IMR-90 (cell line): ENCODE measurements at regions of chr3 and their contacts with region 1.

Region 1: DNA sequence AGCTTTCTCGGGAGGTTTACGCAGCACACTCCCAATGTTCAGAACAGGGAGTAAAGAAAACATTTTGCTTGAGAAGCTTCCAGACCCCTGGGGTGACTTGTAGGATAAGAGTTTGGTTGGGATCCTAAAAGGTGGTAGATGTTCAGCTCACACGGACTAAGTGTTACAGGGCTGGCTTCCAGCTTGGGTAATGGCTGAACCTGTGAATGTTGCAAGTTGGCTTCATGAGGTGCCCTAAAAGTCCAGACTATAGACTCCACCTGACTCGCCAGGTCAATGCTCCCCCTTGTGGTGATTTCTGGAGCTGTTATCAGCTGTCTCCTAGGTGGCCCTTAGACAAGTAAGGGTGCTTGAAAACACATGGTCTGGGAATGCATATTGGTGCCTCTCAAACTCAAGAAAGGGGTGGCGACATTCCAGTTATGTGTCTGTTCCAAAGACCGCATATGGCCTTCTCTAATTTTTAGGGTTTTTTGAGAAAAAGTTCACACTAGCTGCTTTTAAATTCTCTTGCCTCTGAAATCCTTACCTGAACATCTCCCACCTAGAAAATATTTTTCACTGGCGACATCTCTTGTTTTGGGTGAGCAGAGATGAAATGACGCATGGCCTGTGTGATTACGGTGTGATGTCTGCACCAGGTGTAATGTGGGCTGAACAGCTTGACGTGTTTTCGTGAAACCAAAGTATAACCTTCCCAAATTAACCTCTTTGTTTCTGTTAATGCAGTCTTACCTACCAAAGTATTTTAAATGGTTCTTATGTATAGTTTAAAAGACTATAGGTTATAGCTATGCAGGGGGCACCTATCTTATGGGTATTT is 175.7 kb upstream of the KBTBD8 start:
- DNase-seq: peak; percentile 67
- ATAC-seq: peak; percentile 72; the same call in 1 of the 2 replicates
- H3K4me3 ChIP-seq: no peak overlapping the region
- H3K27ac ChIP-seq: no peak overlapping the region
- H3K4me1 ChIP-seq: no peaks in the 10 kb centered on the region
- H3K27me3 ChIP-seq: peaks cover 11% of the 10 kb centered on the region
- CTCF ChIP-seq: peak; percentile 70
- POLR2A ChIP-seq: no peak
- RAD21 ChIP-seq: peak; percentile 73

Region 2: GRCh38 chr3:65094723-65095122 is 1727.7 kb before region 1 on chr3:
- CTCF ChIA-PET with region 1: no interaction called
- POLR2A ChIA-PET with region 1: no interaction called
- dilution Hi-C with region 1: no loop called
- in situ Hi-C with region 1: no loop called
- intact Hi-C with region 1: no loop called
- DNase-seq: no peak
- ATAC-seq: no peak
- H3K4me3 ChIP-seq: no peak overlapping the region
- H3K27ac ChIP-seq: no peak overlapping the region
- H3K4me1 ChIP-seq: no peaks in the 10 kb centered on the region
- H3K27me3 ChIP-seq: no peaks in the 10 kb centered on the region
- CTCF ChIP-seq: no peak
- POLR2A ChIP-seq: no peak
- RAD21 ChIP-seq: no peak

Region 3: DNA sequence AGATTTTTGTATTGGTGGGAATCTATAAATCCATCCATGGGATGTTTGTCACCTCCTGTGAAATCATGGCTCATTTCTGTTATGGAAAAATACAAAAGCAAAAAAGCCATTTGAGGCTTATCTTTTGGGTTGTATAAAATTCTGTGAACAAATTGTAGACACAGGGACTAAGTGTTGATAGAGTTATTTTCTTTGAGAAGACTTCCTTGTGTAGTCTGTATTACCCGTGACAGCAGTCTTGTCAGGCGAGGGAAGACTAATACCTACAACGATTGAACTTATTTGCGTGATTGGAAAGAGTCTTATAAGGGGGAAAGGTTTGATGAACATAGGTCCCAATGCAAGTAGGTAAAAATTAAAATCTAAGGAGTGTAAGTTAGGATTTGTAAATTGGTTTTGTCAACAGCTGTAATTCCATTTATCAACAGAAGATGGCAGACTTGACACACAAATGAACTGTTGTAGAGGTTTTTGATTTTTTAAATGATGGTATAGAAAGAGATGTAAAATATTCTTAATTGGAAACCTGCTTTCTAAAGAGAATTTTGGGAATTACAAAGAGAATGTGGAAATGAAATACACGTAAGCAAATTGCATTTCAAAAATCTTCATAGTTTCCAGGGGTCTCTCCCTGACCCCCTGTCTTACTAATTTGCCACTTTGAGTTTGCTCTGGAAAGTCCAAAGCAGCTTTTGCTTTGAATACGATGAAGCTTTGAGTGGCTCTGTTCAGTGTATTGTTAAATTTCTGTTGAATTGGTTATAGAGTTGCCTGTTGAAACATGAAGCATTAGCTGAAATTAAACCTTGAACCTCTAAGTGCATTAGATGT is 568.4 kb before region 1 on chr3:
- CTCF ChIA-PET with region 1: interaction called, 25 read pairs
- POLR2A ChIA-PET with region 1: no interaction called
- dilution Hi-C with region 1: no loop called
- in situ Hi-C with region 1: no loop called
- intact Hi-C with region 1: loop called (anchors 2 kb)
- DNase-seq: peak; percentile 67
- ATAC-seq: peak; percentile 70
- H3K4me3 ChIP-seq: no peak overlapping the region
- H3K27ac ChIP-seq: no peak overlapping the region
- H3K4me1 ChIP-seq: peaks cover 12% of the 10 kb centered on the region
- H3K27me3 ChIP-seq: no peaks in the 10 kb centered on the region
- CTCF ChIP-seq: peak; percentile 75
- POLR2A ChIP-seq: no peak
- RAD21 ChIP-seq: peak; percentile 77

Region 4: GRCh38 chr3:66270701-66271100 is 551.7 kb before region 1 on chr3:
- CTCF ChIA-PET with region 1: interaction called, 14 read pairs
- POLR2A ChIA-PET with region 1: no interaction called
- dilution Hi-C with region 1: no loop called
- in situ Hi-C with region 1: loop called (anchors 5 kb)
- intact Hi-C with region 1: no loop called
- DNase-seq: peak; percentile 86
- ATAC-seq: peak; percentile 78
- H3K4me3 ChIP-seq: no peak overlapping the region
- H3K27ac ChIP-seq: peak overlapping the region; percentile 100; the same call in 1 of the 2 replicates
- H3K4me1 ChIP-seq: peaks cover 24% of the 10 kb centered on the region
- H3K27me3 ChIP-seq: no peaks in the 10 kb centered on the region
- CTCF ChIP-seq: 0 out of 2 replicates have a peak, but pooled peaks have one; percentile 11
- POLR2A ChIP-seq: no peak
- RAD21 ChIP-seq: no peak

Region 5: DNA sequence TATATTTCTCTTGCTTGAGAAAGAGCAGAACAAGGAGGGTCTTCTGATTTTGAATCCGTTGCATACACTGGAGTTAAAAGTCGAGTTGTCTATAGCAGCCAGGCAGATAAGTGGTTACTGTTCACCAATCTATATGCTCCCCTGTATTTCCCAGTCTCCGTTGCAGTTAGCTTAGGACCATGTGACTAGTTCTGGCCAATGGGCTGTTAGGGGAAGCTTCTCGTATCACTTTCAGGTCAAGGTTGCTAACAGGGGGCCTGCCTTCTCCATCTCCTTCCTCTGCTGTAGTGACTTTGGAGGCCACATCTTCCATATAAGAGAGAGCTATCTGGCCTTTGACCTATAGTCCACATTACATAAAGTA is 12.8 kb before region 1 on chr3:
- CTCF ChIA-PET with region 1: interaction called, 11 read pairs
- POLR2A ChIA-PET with region 1: no interaction called
- dilution Hi-C with region 1: no loop called
- in situ Hi-C with region 1: no loop called
- intact Hi-C with region 1: no loop called
- DNase-seq: no peak
- ATAC-seq: no peak
- H3K4me3 ChIP-seq: no peak overlapping the region
- H3K27ac ChIP-seq: no peak overlapping the region
- H3K4me1 ChIP-seq: no peaks in the 10 kb centered on the region
- H3K27me3 ChIP-seq: no peaks in the 10 kb centered on the region
- CTCF ChIP-seq: no peak
- POLR2A ChIP-seq: no peak
- RAD21 ChIP-seq: no peak

Region 6: DNA sequence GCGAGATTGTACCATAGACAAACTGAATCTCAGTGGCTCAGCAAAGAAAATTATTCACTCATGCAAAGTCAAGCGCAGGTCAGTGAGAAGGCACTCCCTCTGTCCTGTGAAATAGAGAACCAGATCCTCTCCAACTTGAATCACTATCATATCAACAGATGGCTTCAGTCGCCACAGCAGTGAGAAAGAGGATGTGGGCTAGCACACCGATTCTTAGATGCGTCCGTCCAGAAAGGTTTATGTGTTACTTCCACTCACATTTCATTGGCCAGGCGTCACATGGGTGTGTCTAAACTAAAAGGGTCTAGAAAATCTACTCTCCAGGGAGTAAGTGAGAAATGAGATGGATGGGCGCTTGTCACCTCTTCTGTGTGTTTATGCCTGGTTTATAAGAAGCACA is 34.1 kb after region 1 on chr3:
- CTCF ChIA-PET with region 1: no interaction called
- POLR2A ChIA-PET with region 1: no interaction called
- dilution Hi-C with region 1: no loop called
- in situ Hi-C with region 1: no loop called
- intact Hi-C with region 1: no loop called
- DNase-seq: no peak
- ATAC-seq: no peak
- H3K4me3 ChIP-seq: no peak overlapping the region
- H3K27ac ChIP-seq: no peak overlapping the region
- H3K4me1 ChIP-seq: no peaks in the 10 kb centered on the region; the same call in 1 of the 2 replicates
- H3K27me3 ChIP-seq: peaks cover 17% of the 10 kb centered on the region
- CTCF ChIP-seq: no peak
- POLR2A ChIP-seq: no peak
- RAD21 ChIP-seq: no peak

Region 7: DNA sequence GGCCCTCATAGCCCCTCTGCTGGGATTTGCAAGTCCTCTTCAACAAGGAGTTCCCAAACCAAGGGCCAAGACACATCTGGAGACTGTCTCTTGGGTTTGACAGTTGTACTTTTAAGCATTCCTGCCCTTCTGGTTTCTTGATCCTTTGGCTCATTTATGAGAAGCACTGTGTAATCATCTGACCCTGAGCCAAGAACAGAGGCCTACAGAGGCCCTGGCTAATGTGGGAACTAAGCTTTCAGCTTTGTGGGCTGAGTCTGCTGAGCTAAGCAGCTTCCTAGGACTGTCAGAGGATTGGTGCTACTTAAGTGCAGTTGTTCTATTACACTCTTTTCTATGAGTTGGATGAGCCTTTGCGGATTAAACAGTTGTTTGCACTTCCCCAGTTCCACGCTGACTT is 354.0 kb after region 1 on chr3:
- CTCF ChIA-PET with region 1: no interaction called
- POLR2A ChIA-PET with region 1: no interaction called
- dilution Hi-C with region 1: no loop called
- in situ Hi-C with region 1: no loop called
- intact Hi-C with region 1: no loop called
- DNase-seq: no peak
- ATAC-seq: no peak
- H3K4me3 ChIP-seq: no peak overlapping the region
- H3K27ac ChIP-seq: no peak overlapping the region
- H3K4me1 ChIP-seq: no peaks in the 10 kb centered on the region
- H3K27me3 ChIP-seq: no peaks in the 10 kb centered on the region
- CTCF ChIP-seq: no peak
- POLR2A ChIP-seq: no peak
- RAD21 ChIP-seq: no peak